Ovary (tissue), 10 donors: ENCODE measurements at regions of chr1 and their contacts with region 1.

Region 1: GRCh38 chr1:50237056-50237455 is 128.3 kb downstream of the ELAVL4 start:
- DNase-seq: no peak
- H3K4me3 ChIP-seq: no peak overlapping the region
- H3K27ac ChIP-seq: no peak overlapping the region
- H3K4me1 ChIP-seq: no peaks in the 10 kb centered on the region
- H3K27me3 ChIP-seq: no peaks in the 10 kb centered on the region
- CTCF ChIP-seq: no peak
- EP300 ChIP-seq: no peak
- POLR2A ChIP-seq: no peak

Region 2: GRCh38 chr1:50139339-50140181 is 97.5 kb before region 1 on chr1:
- intact Hi-C with region 1: no loop called
- DNase-seq: no peak
- H3K4me3 ChIP-seq: no peak overlapping the region
- H3K27ac ChIP-seq: no peak overlapping the region
- H3K4me1 ChIP-seq: no peaks in the 10 kb centered on the region
- H3K27me3 ChIP-seq: no peaks in the 10 kb centered on the region
- CTCF ChIP-seq: no peak
- EP300 ChIP-seq: no peak
- POLR2A ChIP-seq: no peak

Region 3: DNA sequence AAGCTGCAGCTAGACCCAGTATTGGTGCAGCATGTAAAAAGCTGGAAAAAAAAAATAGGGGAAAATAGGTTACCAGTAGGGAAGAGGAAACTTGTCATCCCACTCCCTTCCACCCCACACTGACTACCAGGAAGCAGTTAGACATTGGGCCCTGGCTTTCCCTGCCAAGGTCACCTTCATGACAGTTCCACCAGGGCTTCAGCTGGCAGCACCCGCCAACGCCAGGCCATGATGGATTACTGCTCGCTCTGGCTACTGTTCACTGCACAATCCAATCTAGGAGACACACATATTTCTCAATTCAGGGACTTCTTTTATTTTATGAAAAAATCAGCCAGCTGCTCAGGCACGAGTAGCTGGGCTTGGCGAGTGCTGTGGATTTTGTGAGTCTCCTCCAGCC is 58.5 kb after region 1 on chr1:
- intact Hi-C with region 1: loop called in 1 of 4 experiments (anchors 10 kb)
- DNase-seq: no peak
- H3K4me3 ChIP-seq: no peak overlapping the region
- H3K27ac ChIP-seq: no peak overlapping the region
- H3K4me1 ChIP-seq: no peaks in the 10 kb centered on the region
- H3K27me3 ChIP-seq: no peaks in the 10 kb centered on the region
- CTCF ChIP-seq: no peak
- EP300 ChIP-seq: no peak
- POLR2A ChIP-seq: no peak